Activated CD4-positive, alpha-beta T cell treated with anti-CD3 and anti-CD28 coated beads for 36 hours (primary cell): ENCODE measurements at regions of chr7 and their contacts with region 1.

Region 1: DNA sequence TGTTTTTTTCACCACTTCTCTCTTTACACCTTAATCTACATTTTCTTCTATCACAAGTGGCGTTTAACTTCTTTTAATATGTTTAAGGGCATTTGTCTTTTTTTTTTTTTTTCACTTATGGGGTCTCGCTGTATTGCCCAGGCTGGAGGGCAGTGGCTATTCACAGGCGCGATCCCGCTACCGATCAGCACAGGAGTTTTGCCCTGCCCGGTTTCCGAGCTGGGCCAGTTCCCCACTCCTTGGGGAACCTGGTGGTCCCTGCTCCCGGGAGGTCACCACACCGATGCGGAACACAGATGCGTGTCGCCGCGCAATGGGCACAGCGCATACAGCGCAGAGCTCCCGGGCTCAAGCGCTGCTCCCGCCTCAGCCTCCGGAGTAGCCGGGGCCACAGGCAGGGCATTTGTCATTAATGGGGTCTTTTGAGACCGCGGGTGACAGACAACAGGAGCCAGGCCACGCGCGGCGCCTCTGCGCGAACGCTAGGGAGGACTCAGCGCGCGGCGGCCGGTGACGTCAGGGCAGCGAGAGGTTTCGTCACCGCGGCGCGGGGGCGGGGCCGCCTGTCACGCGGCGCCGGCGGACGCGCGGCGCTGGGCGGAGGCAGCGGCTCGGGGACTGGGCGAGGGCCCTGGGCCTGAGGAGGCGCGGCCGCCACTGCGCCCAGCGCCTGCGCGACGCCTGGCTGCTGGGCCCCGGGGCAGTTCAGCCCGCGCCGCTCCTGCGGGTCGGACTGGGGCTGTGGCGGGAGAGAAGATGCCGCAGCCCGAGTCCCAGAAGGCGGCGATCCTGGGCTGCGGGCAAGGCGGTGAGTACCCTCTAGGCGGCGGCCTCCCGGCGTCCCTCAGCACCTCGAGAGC is at the start of gene GALNT11:
- DNase-seq: peak; percentile 93
- ATAC-seq: peak; percentile 96
- H3K4me3 Mint-ChIP-seq: peak within 1 kb of the TSS; percentile 73
- H3K27ac Mint-ChIP-seq: peak within 1 kb of the TSS; percentile 85
- H3K4me1 Mint-ChIP-seq: peaks cover 35% of the 10 kb centered on the region
- H3K27me3 Mint-ChIP-seq: no peaks in the 10 kb centered on the region
- total RNA-seq, gene GALNT11: 22.0 to 24.8 TPM

Region 2: DNA sequence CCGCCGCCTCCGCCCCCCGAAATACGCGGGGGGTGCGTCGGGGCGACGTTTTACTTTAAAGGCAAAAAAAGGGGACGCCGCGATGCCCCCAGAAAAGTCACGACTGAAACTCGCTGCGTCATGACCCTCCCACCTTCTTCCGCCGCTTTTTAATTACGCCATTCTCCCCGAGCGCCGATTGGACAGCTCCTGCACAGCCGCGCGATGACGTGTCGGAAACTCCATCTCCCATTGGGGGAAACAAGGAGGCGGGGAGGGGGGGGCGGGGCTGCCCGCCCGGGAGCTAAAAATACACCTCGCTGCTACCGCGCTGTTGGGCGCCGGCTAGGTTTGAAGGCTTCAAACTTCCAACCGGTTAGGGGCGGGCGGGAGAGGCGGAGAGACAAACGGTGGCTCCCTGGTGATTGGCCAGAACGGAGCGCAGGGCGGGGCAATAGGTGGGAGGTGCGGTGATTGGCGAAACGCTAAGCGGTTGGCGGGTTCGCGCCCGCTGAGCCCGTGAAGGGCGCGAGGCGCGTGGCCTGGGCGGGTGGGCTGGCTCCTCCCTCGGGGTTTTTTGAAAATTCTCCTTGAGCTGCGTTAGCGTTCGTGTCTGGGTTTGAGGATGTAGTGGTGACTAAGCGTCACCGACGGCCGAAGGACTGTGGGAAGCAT is 505.4 kb before region 1 on chr7 and contains the start of gene RHEB:
- CTCF ChIA-PET with region 1: no interaction called
- POLR2A ChIA-PET with region 1: no interaction called
- intact Hi-C with region 1: loop called in 1 of 2 experiments (anchors 2 kb)
- DNase-seq: peak; percentile 99
- ATAC-seq: peak; percentile 90
- H3K4me3 Mint-ChIP-seq: peak within 1 kb of the TSS; percentile 84
- H3K27ac Mint-ChIP-seq: peak within 1 kb of the TSS; percentile 97
- H3K4me1 Mint-ChIP-seq: peaks cover 35% of the 10 kb centered on the region
- H3K27me3 Mint-ChIP-seq: no peaks in the 10 kb centered on the region
- total RNA-seq, gene RHEB: 42.8 to 43.0 TPM

Region 3: DNA sequence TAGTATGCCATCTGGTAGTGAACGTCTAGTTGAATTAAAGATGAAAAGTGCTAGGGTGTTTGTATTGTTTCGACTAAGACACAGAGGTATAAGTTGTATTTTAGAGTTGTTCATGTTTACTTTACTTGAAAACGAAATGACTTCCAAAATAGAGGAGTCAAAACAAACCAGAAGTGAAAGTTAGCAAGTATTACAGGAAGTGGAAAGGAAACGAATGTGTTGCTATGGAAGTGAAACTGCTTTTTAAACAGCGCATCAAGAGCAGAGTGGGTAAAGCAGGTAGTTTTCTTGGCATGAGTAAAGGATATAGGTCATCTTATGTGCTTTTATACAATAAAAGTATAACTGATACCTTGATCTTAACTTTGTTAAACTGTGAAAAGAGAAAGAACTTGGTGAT is 89.1 kb before region 1 on chr7:
- CTCF ChIA-PET with region 1: no interaction called
- POLR2A ChIA-PET with region 1: no interaction called
- intact Hi-C with region 1: loop called in 1 of 2 experiments (anchors 2 kb)
- DNase-seq: no peak
- ATAC-seq: peak; percentile 88
- H3K4me3 Mint-ChIP-seq: peak overlapping the region; percentile 43
- H3K27ac Mint-ChIP-seq: peak overlapping the region; percentile 84
- H3K4me1 Mint-ChIP-seq: peaks cover 23% of the 10 kb centered on the region
- H3K27me3 Mint-ChIP-seq: no peaks in the 10 kb centered on the region

Region 4: DNA sequence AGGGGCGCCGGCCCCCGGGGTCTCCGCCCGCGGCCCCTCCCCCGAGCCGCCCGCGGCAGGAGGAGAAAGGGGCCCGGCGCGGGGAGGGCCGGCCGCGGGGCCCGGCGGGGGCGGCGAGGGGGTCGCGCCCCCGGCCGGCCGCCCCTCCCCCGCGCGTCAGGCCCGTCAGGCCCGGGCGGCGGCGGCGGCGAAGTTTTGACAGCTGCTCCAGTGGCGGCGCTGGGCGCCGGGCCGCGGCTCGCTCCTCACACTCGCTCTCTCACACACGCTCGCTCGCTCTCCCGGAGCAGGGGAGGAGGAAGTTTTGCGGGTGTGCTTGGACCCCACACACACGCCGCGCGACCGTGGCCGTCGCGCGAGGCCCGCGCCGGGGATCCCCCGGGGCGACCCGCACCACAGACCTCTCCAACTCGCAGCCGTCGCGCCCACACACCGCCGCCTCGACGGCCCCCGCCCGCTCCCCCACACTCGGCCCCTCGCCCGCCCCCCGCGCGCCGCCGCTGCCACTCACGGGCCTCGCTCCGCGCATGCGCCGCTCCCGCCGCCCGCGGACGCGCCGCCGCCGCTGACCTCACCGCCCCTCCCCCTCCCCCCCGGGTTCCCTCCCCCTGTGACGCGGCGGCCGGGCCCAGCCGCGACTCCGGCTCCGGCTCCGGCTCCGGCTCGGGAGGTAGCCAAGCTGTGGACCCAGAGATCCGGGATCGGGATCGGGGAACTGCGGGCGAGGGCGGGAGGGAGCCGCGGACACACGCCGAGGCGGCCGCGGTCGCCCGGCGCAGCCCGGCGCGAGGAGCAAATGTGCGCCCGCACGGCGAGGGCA is 411.0 kb after region 1 on chr7:
- CTCF ChIA-PET with region 1: no interaction called
- POLR2A ChIA-PET with region 1: no interaction called
- intact Hi-C with region 1: loop called in 1 of 2 experiments (anchors 10 kb)
- DNase-seq: peak; percentile 93
- ATAC-seq: peak; percentile 55
- H3K4me3 Mint-ChIP-seq: peak overlapping the region; percentile 74
- H3K27ac Mint-ChIP-seq: peak overlapping the region; percentile 82
- H3K4me1 Mint-ChIP-seq: peaks cover 22% of the 10 kb centered on the region
- H3K27me3 Mint-ChIP-seq: no peaks in the 10 kb centered on the region

Region 5: GRCh38 chr7:152675759-152676636 is 650.7 kb after region 1 on chr7 and contains the start of gene XRCC2:
- CTCF ChIA-PET with region 1: no interaction called
- POLR2A ChIA-PET with region 1: no interaction called
- intact Hi-C with region 1: loop called in 1 of 2 experiments (anchors 2 kb)
- DNase-seq: peak; percentile 97
- ATAC-seq: peak; percentile 96
- H3K4me3 Mint-ChIP-seq: peak within 1 kb of the TSS; percentile 83
- H3K27ac Mint-ChIP-seq: peak within 1 kb of the TSS; percentile 98
- H3K4me1 Mint-ChIP-seq: peaks cover 8% of the 10 kb centered on the region
- H3K27me3 Mint-ChIP-seq: no peaks in the 10 kb centered on the region
- total RNA-seq, gene XRCC2: 19.3 to 23.6 TPM